ENCODE measurements at regions of chr10 and their contacts with region 1.

Region 1: GRCh38 chr10:102641880-102642735 is 2.2 kb upstream of the TRIM8 start:
- DNase-seq: peak; percentile 94
- H3K4me3 Mint-ChIP-seq: peak overlapping the region; percentile 90
- H3K27ac Mint-ChIP-seq: peak overlapping the region; percentile 82
- H3K4me1 Mint-ChIP-seq: peaks cover 19% of the 10 kb centered on the region
- H3K27me3 Mint-ChIP-seq: no peaks in the 10 kb centered on the region

Region 2: GRCh38 chr10:102132563-102133372 is 509.3 kb before region 1 on chr10 and contains the start of gene PPRC1:
- intact Hi-C with region 1: loop called (anchors 5 kb)
- DNase-seq: peak; percentile 97
- H3K4me3 Mint-ChIP-seq: peak within 1 kb of the TSS; percentile 95
- H3K27ac Mint-ChIP-seq: peak within 1 kb of the TSS; percentile 94
- H3K4me1 Mint-ChIP-seq: peaks cover 29% of the 10 kb centered on the region
- H3K27me3 Mint-ChIP-seq: no peaks in the 10 kb centered on the region
- total RNA-seq, gene PPRC1: 112 and 115 TPM in 2 replicates

Region 3: DNA sequence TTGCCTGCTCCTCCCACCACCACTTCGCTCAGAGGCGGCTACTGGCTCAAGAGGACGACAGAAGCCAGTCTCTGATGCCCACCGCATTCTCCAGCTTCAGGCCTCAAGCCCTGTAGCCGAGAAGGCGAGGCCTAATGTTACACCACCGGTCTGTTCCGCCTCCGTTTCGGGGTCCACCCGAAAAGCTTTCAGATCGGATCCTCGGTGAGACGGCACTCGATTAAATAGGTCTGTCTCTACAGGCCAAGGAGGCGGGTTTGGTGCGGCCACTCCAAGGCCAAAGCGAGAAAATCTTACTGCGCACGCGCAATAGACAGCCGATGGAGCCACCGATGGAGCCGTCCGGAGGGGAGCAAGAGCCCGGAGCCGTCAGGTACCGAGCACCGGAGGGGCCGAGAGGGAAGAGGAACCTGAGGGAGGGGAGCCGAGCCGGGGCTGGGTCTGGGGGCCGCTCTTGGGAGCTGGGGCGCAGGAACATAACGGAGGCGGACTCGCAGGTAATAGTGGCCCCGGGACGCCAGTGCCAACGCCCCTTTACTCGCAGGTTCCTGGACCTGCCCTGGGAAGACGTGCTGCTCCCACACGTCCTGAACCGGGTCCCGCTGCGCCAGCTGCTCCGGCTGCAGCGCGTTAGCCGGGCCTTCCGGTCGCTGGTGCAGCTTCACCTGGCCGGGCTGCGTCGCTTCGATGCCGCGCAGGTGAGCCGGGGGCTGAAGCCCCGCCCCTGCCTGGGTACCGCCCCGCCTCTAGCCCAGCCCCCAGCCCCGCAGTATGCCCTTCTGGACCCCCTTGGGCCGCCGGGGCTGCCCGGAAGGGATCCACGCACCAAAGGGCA is 221.1 kb before region 1 on chr10 and contains the start of gene FBXL15:
- intact Hi-C with region 1: loop called (anchors 1 kb)
- DNase-seq: peak; percentile 96
- H3K4me3 Mint-ChIP-seq: peak within 1 kb of the TSS; percentile 99
- H3K27ac Mint-ChIP-seq: peak within 1 kb of the TSS; percentile 98
- H3K4me1 Mint-ChIP-seq: peaks cover 34% of the 10 kb centered on the region
- H3K27me3 Mint-ChIP-seq: peaks cover 9% of the 10 kb centered on the region
- total RNA-seq, gene FBXL15: 14.5 and 18.5 TPM in 2 replicates

Region 4: DNA sequence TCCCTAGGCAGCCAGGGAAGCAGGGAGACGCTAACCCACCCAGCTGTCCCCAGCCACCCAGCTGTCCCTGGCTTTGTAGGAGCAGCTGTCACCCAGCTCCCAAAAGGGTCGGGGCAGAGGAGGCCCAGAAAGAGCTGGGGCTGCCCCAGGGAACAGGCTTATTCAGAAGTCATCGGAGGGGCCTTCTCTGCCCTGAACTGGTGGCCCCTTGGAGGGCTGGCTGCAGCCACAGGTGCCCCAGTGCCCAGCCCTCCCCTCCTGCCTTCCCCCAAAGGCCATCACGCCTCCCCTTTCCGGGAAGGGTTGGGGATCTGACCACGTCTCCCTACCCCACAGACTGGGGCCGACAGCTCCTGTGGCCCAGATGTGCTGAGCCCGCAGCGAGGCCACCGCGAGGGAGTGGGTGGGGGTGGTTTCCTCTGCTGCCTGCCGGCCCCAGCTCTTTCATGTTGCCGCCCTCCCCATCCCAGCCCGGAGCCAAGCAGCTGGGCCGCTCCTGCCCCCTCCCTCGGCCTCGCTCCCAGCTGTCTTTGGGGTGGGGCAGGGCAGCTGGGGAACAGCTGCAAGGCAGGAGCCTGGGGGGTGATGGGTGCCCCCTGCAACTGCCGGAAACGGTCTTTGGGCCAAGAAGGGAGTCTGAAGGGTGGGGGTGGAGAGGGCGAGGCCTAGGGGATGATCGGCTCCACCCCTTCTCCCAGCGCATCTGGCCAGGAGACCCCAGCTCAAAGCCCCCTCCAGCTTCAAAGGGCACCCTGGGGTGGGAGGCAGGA is 19.0 kb after region 1 on chr10:
- intact Hi-C with region 1: loop called (anchors 1 kb)
- DNase-seq: peak; percentile 65
- H3K4me3 Mint-ChIP-seq: peak overlapping the region; percentile 62
- H3K27ac Mint-ChIP-seq: peak overlapping the region; percentile 88
- H3K4me1 Mint-ChIP-seq: peaks cover 39% of the 10 kb centered on the region
- H3K27me3 Mint-ChIP-seq: peaks cover 2% of the 10 kb centered on the region

Region 5: DNA sequence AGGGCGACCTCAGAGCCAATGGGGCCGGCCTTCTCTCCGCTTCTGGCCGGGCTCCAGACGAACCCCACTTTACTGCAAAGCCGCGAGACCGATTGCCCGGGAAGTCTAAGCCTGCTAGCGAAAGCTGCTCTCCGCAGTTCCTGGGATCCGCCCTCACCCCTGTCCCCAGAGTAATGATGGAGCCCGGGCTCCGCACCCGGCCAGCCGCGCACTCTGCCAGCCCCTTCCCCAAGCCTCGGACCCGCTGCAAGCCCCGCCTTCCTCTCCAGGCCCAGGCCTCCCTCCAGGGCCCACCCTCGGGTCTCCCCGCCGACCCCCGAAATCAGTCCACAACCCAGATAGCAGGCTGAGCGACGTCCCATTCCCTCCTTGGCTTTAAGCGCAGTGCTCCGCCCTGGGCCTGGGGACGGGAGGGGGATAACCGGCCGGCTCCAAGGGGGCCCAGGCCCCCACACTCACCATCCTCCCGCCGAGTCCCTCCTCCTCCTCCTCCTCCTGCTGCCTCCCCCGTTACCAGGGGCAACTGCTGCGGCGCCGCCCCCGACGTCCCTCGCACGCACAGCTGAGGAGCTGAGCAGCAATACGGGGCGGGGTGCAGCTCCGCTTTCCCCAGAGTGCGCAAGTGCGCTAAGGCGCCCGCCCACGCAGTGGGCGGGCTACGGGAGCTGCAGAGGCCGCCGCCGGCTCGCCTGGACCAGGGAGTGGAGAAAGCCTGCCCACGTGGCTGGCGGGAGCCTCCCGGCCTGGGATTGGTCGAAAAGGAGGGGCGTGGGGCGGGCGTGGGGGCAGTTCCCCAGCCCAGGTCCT is 71.9 kb after region 1 on chr10 and contains the start of gene ARL3:
- intact Hi-C with region 1: loop called (anchors 1 kb)
- DNase-seq: peak; percentile 95
- H3K4me3 Mint-ChIP-seq: peak within 1 kb of the TSS; percentile 88
- H3K27ac Mint-ChIP-seq: peak within 1 kb of the TSS; percentile 91
- H3K4me1 Mint-ChIP-seq: peaks cover 52% of the 10 kb centered on the region
- H3K27me3 Mint-ChIP-seq: no peaks in the 10 kb centered on the region
- total RNA-seq, gene ARL3: 6.6 and 6.8 TPM in 2 replicates

Region 6: GRCh38 chr10:102853944-102854694 is 212.0 kb after region 1 on chr10 and contains the start of gene BORCS7:
- intact Hi-C with region 1: loop called (anchors 1 kb)
- DNase-seq: peak; percentile 84
- H3K4me3 Mint-ChIP-seq: peak within 1 kb of the TSS; percentile 82
- H3K27ac Mint-ChIP-seq: peak within 1 kb of the TSS; percentile 92
- H3K4me1 Mint-ChIP-seq: peaks cover 19% of the 10 kb centered on the region
- H3K27me3 Mint-ChIP-seq: no peaks in the 10 kb centered on the region
- total RNA-seq, gene BORCS7: 9.7 and 12.6 TPM in 2 replicates

Region 7: GRCh38 chr10:103367782-103368518 is 725.8 kb after region 1 on chr10 and contains the start of gene TAF5:
- intact Hi-C with region 1: loop called (anchors 1 kb)
- DNase-seq: peak; percentile 89
- H3K4me3 Mint-ChIP-seq: peak within 1 kb of the TSS; percentile 89
- H3K27ac Mint-ChIP-seq: peak within 1 kb of the TSS; percentile 91
- H3K4me1 Mint-ChIP-seq: peaks cover 5% of the 10 kb centered on the region
- H3K27me3 Mint-ChIP-seq: no peaks in the 10 kb centered on the region
- total RNA-seq, gene TAF5: 10.4 and 11.0 TPM in 2 replicates